ENCODE measurements at regions of chr22 and their contacts with region 1.

Region 1: DNA sequence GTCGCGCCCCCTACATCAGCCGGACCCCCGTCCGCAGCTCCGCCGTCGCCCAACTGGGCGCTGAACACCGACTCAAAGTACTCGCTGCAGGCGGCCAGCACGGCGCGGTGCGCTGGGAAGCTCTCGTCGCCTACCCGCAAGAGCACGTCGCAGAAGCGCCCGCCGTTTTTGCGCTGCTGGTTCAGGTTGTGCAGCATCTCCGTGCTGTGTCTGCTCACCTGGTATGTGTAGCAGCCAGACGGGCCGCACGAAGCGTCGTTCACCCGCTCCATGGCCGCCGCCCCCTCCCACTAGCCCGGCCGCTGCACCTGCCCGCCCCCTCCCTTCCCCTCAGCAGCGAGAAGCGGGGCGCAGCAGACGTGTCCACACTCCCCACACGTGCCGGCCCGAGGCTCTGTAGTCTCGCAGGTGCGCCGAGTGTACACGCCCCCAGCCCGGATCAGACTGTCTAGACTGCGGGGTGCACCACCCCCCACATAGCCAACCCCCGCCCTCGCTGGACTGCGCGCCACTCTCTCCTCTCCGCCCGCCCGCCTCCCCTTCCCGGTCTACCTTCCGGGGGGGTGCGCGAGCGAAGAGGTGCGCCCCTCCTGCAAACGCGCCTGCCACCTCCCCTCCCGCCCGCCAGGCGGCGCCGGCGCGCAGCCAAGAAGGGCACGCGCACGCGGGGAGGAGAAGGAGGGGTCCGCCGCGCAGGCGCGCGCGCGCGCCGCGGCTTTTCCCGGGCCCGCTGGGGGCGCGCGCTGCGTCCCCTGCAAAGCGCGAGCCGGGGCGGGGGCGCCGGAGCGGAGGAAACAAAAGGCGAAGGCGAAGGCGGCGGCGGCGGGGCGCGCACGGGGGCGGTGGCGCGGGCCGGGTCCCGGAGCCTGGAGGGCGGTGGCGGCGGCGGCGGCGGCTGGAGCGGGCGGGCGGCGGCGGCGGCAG is 553 bp downstream of the PATZ1 start:
- DNase-seq: peak; percentile 32 to 93 (median 85)

Region 2: DNA sequence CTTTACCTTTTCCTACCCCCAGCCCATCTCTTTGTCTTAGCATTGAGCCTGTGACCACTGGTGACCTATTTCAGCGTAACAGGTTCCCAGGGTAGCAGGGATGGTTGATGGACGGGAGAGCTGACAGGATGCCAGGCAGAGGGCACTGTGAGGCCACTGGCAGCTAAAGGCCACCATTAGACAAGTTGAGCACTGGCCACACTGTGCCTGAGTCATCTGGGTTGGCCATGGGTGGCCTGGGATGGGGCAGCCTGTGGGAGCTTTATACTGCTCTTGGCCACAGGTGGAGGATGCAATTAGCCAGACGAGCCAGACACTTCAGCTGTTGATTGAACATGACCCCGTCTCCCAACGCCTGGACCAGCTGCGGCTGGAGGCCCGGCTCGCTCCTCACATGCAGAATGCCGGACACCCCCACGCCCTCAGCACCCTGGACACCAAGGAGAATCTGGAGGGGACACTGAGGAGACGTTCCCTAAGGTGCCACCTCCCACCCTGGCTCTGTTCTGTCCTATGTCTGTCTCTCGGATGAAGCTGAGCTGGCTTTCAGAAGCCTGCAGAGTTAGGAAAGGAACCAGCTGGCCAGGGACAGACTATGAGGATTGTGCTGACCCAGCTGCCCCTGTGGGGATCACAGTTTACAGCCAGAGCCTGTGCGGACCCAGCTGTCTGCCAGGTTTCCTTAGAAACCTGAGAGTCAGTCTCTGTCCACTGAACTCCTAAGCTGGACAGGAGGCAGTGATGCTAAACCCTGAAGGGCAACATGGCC is 83.1 kb before region 1 on chr22:
- intact Hi-C with region 1: no loop called
- DNase-seq: peak in 1 of 42 donors; percentile 58

Region 3: GRCh38 chr22:31290494-31291471 is 54.8 kb before region 1 on chr22:
- intact Hi-C with region 1: loop called (anchors 2 kb)
- DNase-seq: peak; percentile 93 to 98 (median 95)

Region 4: DNA sequence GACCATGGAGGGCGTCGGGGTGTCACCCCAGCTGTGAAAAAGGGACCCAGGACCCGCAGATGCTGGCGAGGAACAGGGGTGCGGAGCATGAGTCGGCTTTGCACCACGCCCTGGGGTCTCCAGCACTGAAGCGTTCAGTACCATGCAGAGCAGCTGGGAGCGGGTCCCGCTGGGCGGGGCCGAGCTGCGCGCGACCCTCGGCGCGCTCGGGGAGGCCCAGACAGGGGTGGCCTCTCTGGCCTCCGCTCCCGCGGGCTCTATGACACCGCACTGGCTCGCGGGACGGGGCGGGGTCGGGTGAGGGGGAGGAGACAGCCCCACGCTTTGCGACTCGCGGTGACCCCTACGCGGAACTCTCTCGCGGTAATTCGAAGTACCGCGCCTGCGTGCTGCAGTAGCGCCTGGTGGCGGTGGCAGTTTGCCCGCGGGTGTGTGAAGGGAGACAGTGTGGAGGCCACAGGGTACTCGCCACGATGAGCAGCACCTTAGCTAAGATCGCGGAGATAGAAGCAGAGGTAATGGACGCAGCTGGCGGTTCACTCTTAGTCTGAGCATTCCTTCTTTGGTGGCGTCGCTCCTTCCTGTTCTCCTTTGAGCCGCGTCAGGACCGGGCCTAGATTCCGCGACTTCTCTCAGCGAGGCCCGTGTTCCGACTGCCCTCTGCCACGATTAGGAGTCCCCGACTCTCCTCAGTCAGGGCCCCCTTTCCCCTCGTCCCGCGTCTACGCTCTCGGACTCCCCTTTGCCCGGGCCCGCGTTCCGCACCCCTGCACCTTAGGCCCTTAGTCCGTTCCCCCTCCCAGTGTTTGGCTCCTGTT is 53.8 kb after region 1 on chr22 and contains the start of gene DRG1:
- intact Hi-C with region 1: loop called (anchors 2 kb)
- DNase-seq: peak; percentile 93 to 99 (median 98)

Region 5: GRCh38 chr22:31496007-31496734 is 150.6 kb after region 1 on chr22 and contains the start of gene SFI1:
- intact Hi-C with region 1: loop called (anchors 5 kb)
- DNase-seq: peak; percentile 87 to 98 (median 95)

Measured in head of caudate nucleus (tissue), 42 donors.